ENCODE measurements at regions of chr1 and their contacts with region 1.

Region 1: GRCh38 chr1:16082289-16083038 is 9.0 kb upstream of the FAM131C start:
- DNase-seq: peak; percentile 87
- H3K4me3 ChIP-seq: no peak overlapping the region
- H3K27ac ChIP-seq: no peak overlapping the region
- H3K4me1 ChIP-seq: peaks cover 0 to 20% (median 9%) of the 10 kb centered on the region in 6 donors
- H3K27me3 ChIP-seq: no peaks in the 10 kb centered on the region
- CTCF ChIP-seq: peak; percentile 63 to 92 (median 83)
- POLR2A ChIP-seq: no peak

Region 2: GRCh38 chr1:16187748-16188401 is 105.4 kb after region 1 on chr1:
- intact Hi-C with region 1: loop called (anchors 2 kb)
- DNase-seq: peak; percentile 93
- H3K4me3 ChIP-seq: no peak overlapping the region
- H3K27ac ChIP-seq: no peak overlapping the region
- H3K4me1 ChIP-seq: peaks cover 0 to 38% (median 17%) of the 10 kb centered on the region in 6 donors
- H3K27me3 ChIP-seq: peaks cover 0 to 23% (median 0%) of the 10 kb centered on the region in 7 donors
- CTCF ChIP-seq: peak; percentile 88 to 98 (median 96)
- POLR2A ChIP-seq: no peak

Region 3: GRCh38 chr1:16474166-16474800 is 391.8 kb after region 1 on chr1:
- intact Hi-C with region 1: no loop called
- DNase-seq: peak; percentile 58
- H3K4me3 ChIP-seq: no peak overlapping the region
- H3K27ac ChIP-seq: no peak overlapping the region
- H3K4me1 ChIP-seq: no peaks in the 10 kb centered on the region
- H3K27me3 ChIP-seq: no peaks in the 10 kb centered on the region
- CTCF ChIP-seq: no peak
- POLR2A ChIP-seq: no peak